ENCODE measurements at regions of chr6 and their contacts with region 1.

Region 1: DNA sequence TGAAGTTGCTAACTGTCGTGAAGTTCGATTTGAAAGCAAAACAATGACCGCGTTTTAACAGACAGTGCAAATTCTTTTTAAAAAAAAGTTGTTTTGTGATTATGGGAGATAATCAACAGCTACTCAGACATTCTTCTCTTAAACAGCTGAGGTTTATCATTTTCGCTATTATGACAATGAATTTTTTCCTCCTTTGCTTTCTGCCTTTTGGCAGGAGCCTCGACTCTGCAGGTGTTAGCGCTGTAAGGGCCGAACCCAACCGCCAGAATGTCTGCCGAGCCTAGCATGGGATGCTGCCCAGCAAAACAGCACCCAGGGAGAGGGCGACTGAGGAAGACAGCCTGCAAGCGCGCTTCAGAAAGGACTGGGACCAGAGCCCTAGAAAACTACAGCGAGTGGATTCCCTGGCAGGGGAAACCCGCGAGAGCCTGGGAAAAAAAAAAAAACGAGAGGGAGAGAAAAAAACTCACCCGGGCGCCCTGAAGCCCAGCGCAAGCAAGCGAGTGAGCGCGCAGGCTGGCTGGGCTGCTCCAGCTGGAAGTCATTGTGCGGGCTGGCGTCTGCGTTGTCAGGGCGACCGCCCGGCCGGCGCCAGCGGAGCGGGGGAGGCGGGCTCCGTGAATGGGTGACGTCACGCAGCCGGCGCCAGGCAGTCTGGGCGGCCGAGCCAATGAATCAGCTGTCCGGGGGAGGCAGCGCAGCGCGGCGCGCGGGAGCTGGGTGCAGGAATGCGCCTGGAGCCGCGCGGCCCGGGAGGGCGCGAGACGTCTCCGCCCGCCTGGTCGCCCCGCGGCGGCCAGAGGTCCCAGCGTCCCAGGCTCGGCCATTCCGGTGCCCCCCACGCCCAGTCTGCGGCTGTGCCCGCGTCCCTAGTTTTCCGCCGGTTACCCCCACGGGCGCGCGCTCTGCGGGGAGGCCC is 32.7 kb upstream of the ID4 start:
- DNase-seq: peak; percentile 92
- H3K4me3 Mint-ChIP-seq: peak overlapping the region; percentile 76
- H3K27ac Mint-ChIP-seq: no peak overlapping the region
- H3K4me1 Mint-ChIP-seq: no peaks in the 10 kb centered on the region
- H3K27me3 Mint-ChIP-seq: peaks cover 59% of the 10 kb centered on the region
- CTCF ChIP-seq: no peak

Region 2: GRCh38 chr6:19410481-19410880 is 394.0 kb before region 1 on chr6:
- CTCF ChIA-PET with region 1: no interaction called
- POLR2A ChIA-PET with region 1: no interaction called
- intact Hi-C with region 1: loop called (anchors 5 kb)
- DNase-seq: peak; percentile 89
- H3K4me3 Mint-ChIP-seq: no peak overlapping the region
- H3K27ac Mint-ChIP-seq: no peak overlapping the region
- H3K4me1 Mint-ChIP-seq: peaks cover 9% of the 10 kb centered on the region
- H3K27me3 Mint-ChIP-seq: no peaks in the 10 kb centered on the region
- CTCF ChIP-seq: no peak

Region 3: DNA sequence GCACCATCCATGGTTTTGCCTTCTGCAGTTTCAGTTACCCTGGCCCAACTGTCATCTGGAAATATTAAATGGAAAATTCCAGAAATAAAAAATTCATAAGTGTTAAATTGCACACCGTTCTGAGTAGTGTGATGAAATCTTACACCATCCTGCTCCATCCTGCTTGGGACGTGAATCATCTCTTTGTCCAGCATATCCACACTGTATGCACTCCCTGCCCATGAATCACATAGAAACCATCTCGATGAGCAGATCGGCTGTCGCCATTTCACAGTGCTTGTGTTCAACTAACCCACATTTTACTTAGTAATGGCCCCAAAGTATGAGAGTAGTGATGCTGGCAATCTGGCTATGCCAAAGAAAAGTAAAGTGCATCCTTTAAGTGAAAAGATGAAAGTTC is 73.2 kb before region 1 on chr6:
- CTCF ChIA-PET with region 1: no interaction called
- POLR2A ChIA-PET with region 1: interaction called, 3 read pairs
- intact Hi-C with region 1: loop called (anchors 10 kb)
- DNase-seq: peak; percentile 94
- H3K4me3 Mint-ChIP-seq: no peak overlapping the region
- H3K27ac Mint-ChIP-seq: peak overlapping the region; percentile 21
- H3K4me1 Mint-ChIP-seq: peaks cover 13% of the 10 kb centered on the region
- H3K27me3 Mint-ChIP-seq: no peaks in the 10 kb centered on the region
- CTCF ChIP-seq: no peak

Region 4: DNA sequence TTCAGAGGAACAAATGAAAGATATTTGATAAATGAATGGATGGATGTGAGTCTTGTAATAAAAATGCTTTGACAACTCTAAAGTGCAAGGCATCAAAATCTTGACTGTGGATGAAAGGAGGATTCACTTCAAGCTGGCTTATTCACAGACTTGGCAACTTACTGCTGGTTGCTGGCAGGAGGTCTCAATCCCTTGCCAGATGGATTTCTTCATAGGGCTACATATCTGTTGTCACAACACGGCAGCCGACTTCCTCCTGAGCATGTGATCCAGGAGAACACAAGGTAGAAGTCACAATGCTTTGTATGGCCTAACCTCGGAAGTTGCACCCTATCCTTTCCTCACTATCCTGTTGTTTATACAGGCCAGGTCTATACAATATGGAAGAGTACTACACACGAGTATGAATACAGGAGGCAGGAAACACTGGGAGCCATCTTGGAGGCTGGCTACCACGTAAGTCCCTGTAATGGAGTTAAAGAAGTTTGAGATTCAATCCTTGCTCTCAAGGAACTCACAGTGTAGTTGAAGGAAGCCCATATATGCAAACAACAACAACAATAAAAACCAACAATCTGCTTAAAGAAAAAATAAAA is 130.6 kb after region 1 on chr6:
- CTCF ChIA-PET with region 1: no interaction called
- POLR2A ChIA-PET with region 1: no interaction called
- intact Hi-C with region 1: no loop called
- DNase-seq: peak; percentile 15
- H3K4me3 Mint-ChIP-seq: no peak overlapping the region
- H3K27ac Mint-ChIP-seq: no peak overlapping the region
- H3K4me1 Mint-ChIP-seq: no peaks in the 10 kb centered on the region
- H3K27me3 Mint-ChIP-seq: no peaks in the 10 kb centered on the region
- CTCF ChIP-seq: no peak

Region 5: GRCh38 chr6:20252311-20252710 is 447.8 kb after region 1 on chr6:
- CTCF ChIA-PET with region 1: no interaction called
- POLR2A ChIA-PET with region 1: no interaction called
- intact Hi-C with region 1: no loop called
- DNase-seq: peak; percentile 18
- H3K4me3 Mint-ChIP-seq: no peak overlapping the region
- H3K27ac Mint-ChIP-seq: no peak overlapping the region
- H3K4me1 Mint-ChIP-seq: no peaks in the 10 kb centered on the region
- H3K27me3 Mint-ChIP-seq: no peaks in the 10 kb centered on the region
- CTCF ChIP-seq: no peak